Astrocyte of the cerebellum (primary cell): ENCODE measurements at regions of chr1 and their contacts with region 1.

Region 1: GRCh38 chr1:64242895-64243756 is 39.7 kb downstream of the UBE2U start:
- DNase-seq: peak; percentile 42
- H3K4me3 ChIP-seq: no peak overlapping the region
- CTCF ChIP-seq: peak; percentile 14

Region 2: DNA sequence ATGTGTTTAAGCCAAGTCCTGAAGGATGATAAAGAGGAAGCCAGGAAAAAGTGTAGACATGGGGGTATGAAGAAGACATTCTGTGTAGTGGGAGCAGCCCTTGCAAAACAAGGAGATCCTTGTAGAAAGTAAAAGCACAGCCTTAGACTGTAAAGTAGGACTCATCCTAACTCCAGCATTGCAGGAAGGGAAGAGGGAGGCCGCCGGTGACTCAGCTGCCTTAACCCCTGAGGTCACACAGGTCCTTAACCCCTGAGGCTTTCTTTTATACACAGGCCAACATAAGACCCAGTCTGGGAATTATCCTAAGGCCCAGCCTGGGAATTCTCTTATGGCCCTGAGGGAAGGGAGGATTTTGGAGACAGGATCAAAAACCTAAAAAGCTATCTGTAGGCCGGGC is 631.9 kb before region 1 on chr1:
- in situ Hi-C with region 1: loop called (anchors 5 kb)
- DNase-seq: no peak
- H3K4me3 ChIP-seq: no peak overlapping the region
- CTCF ChIP-seq: no peak

Region 3: DNA sequence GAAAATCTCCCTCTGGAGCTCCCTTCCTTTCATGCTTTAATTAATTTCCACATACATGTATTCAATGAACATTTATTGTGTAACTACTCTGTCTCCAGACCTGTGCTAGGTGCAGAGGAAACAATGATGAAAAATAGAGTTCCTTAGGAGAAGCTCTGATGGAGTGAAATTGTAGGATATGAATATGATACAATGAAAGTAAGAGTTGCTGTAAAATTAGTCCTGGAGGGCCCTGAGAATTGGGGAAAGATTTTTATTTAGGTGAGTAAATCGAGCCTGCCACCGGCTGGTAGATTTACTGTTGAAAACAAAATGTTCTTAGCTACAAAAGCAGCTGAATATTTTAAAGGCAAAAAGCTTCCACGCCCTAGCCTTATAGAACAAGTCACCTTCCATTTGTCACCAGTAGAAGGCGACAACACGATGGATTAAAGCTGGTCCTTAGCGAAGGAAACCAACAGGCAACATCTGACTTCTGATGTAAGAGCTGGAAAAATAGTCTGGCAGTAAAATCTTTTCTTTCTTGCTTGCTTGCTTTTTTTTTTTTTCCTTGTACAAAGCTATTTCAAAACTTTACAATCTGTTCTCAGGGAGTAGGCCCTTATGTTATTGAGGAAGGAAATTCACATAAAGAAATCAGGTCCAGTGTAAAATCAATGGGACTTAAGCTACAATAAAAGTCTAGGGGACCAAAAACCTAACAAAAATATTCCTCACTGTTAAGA is 551.3 kb before region 1 on chr1:
- in situ Hi-C with region 1: loop called (anchors 25 kb)
- DNase-seq: peak; percentile 88
- H3K4me3 ChIP-seq: no peak overlapping the region
- CTCF ChIP-seq: peak; percentile 79

Region 4: DNA sequence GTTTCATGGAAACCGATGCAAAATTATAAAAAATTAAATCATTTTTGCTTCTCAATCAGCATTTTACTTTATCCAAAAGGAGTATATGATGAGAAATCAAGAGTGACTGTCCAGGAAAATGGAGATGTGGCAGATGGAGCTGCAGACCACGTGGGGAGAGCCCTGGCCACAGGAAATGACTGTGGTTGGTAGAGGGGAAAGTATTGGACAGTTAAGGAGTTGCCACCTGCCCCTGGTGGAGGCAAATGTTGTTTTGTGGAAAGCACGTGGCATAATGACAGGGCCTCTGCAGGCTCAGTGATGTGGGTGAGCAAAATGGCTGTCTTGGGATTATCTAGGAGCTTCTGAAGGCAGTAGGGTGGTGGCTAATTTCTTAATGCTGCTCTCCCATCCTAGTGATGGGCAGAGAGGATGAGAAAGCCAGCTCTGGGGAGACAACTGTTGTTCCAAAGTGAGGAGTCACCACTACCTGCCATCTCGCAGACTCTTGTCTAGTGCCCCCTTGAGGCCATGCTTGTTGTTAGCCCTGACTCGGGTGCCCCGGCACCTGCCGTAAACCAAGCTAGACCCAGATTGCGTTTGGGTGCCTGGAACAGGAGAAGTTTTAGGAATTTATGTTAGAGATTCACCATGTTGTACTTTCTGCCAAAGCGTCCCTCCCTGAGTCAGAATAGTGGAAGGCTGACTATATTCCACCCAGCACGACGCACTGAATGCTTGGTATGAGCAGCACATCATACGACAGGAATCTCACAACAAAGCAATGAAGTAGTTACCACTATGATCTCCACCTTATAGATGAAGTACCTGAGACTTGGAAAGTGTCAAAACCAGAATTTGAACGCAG is 325.3 kb before region 1 on chr1:
- in situ Hi-C with region 1: loop called (anchors 25 kb)
- DNase-seq: no peak
- H3K4me3 ChIP-seq: no peak overlapping the region
- CTCF ChIP-seq: peak; percentile 15

Region 5: GRCh38 chr1:64139878-64140277 is 103.2 kb before region 1 on chr1:
- in situ Hi-C with region 1: loop called (anchors 5 kb)
- DNase-seq: no peak
- H3K4me3 ChIP-seq: no peak overlapping the region
- CTCF ChIP-seq: no peak

Region 6: GRCh38 chr1:64282354-64282753 is 39.2 kb after region 1 on chr1:
- in situ Hi-C with region 1: no loop called
- DNase-seq: no peak
- H3K4me3 ChIP-seq: no peak overlapping the region
- CTCF ChIP-seq: no peak

Region 7: GRCh38 chr1:64417803-64418202 is 174.7 kb after region 1 on chr1:
- in situ Hi-C with region 1: no loop called
- DNase-seq: no peak
- H3K4me3 ChIP-seq: no peak overlapping the region
- CTCF ChIP-seq: no peak

Region 8: DNA sequence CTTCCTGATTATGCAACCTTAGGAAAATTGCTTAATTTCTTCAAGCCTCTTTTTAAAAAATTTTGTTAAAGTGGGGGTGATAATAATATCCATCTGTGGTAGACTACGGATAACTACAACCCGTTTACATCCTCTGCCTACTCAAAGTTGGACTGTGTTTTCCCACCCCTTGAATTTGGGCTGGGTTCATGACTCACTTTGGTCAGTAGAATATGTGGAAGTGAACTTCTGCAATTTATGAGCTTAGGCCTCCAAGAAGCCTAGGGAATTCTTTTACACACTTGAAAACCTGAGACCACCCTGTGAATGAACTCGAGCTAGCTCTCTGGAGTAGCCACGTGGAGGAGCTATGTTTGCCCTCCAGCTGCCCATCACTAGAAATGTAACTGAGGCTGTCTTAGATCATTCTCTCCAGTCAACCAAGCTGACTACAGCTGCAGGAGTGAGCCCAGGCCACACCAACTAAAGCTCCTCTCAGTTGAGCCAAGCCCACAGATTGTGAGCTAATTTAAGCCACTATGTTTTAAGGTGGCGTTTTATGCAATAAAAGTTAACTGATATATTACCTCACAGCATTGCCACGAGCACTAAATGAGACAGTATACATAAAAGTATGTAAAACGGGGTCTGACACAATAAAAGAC is 197.2 kb after region 1 on chr1:
- in situ Hi-C with region 1: no loop called
- DNase-seq: no peak
- H3K4me3 ChIP-seq: no peak overlapping the region
- CTCF ChIP-seq: no peak

Region 9: DNA sequence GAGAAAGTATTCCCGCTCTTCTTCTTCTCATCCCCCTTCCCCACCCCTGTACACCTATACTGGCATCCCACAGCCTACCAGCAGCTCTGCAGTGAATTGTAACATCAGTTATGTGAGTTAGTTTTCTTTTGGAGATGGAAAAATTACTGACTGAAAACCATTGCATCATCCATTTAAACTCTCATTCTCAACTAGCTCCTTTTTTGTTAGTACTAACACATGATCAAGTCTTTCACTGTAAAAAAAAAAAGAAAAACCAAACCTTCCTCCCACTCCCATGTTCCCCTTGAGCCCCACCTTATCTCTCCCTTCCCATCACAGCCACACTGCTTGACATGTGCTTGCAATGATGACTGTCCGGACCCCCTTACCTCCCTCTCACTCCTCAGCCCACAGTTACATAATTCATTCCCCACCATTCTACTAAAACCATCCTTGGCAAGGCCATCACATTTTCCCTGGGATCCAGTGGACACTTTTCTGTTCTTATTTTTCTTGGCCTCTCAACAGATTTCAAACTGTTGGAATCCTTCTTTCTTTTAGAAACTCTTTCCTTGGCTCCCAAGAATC is 478.5 kb after region 1 on chr1:
- in situ Hi-C with region 1: no loop called
- DNase-seq: no peak
- H3K4me3 ChIP-seq: no peak overlapping the region
- CTCF ChIP-seq: no peak